B cell (primary cell): ENCODE measurements at regions of chr12 and their contacts with region 1.

Region 1: GRCh38 chr12:49358483-49359141 is 8.7 kb upstream of the SPATS2 start:
- DNase-seq: peak; percentile 83
- ATAC-seq: peak; percentile 91
- H3K4me3 ChIP-seq: no peak overlapping the region
- H3K4me3 Mint-ChIP-seq: no peak overlapping the region
- H3K27ac ChIP-seq: no peak overlapping the region
- H3K27ac Mint-ChIP-seq: no peak overlapping the region
- H3K4me1 ChIP-seq: peaks cover 3 to 5% of the 10 kb centered on the region in 2 donors
- H3K4me1 Mint-ChIP-seq: peaks cover 2% of the 10 kb centered on the region
- H3K27me3 ChIP-seq: peaks cover 0 to 13% (median 7%) of the 10 kb centered on the region in 4 experiments
- H3K27me3 Mint-ChIP-seq: peaks cover 32% of the 10 kb centered on the region
- CTCF ChIP-seq: peak; percentile 85

Region 2: DNA sequence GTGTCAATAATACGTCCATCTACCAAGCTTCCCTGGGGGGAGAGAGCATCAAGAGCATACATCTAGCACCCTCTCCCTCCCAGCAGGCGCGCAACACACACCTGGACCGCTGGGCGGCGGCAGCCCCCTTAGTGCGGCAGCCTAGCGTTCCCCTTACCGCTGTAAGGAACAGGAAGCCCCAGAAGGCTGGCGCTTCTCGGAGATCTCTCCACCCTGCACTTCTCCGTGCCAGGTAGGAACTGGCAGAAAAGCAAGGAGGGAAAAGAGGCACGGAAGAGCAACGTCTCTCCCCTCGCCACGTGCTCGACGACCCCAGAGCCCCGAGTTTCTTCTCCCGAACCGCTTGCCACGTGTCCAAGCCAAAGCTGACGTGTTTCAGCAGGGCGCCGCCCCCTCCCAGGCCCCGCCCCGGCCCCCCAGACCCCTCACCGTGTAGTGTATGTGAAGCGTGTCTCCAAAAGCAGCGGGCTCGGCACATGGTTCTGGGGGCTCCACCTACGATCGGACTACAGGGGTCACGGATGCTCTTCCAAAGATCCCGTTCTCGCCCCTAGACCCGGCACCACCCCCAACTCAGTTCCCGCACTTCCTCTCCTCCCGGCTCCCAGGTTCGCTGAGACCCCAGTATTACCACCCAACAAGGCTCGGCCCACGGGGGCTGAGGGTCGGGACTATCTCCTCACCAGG is 433.9 kb before region 1 on chr12:
- CTCF ChIA-PET with region 1: no interaction called
- POLR2A ChIA-PET with region 1: no interaction called
- intact Hi-C with region 1: no loop called
- DNase-seq: peak; percentile 88
- ATAC-seq: peak; percentile 82
- H3K4me3 ChIP-seq: peak overlapping the region; percentile 70 to 100 (median 84)
- H3K4me3 Mint-ChIP-seq: peak overlapping the region; percentile 98
- H3K27ac ChIP-seq: peak overlapping the region; percentile 88 to 94
- H3K27ac Mint-ChIP-seq: peak overlapping the region; percentile 95
- H3K4me1 ChIP-seq: peaks cover 10 to 12% of the 10 kb centered on the region in 2 donors
- H3K4me1 Mint-ChIP-seq: peaks cover 14% of the 10 kb centered on the region
- H3K27me3 ChIP-seq: no peaks in the 10 kb centered on the region
- H3K27me3 Mint-ChIP-seq: no peaks in the 10 kb centered on the region
- CTCF ChIP-seq: peak; percentile 86

Region 3: GRCh38 chr12:49322708-49323523 is 35.7 kb before region 1 on chr12 and contains the start of gene TROAP:
- CTCF ChIA-PET with region 1: interaction called, 13 read pairs
- POLR2A ChIA-PET with region 1: no interaction called
- intact Hi-C with region 1: no loop called
- DNase-seq: peak; percentile 98
- ATAC-seq: peak; percentile 99
- H3K4me3 ChIP-seq: peak within 1 kb of the TSS; percentile 66 to 85 (median 70)
- H3K4me3 Mint-ChIP-seq: peak within 1 kb of the TSS; percentile 99
- H3K27ac ChIP-seq: peak within 1 kb of the TSS; percentile 40 to 74
- H3K27ac Mint-ChIP-seq: peak within 1 kb of the TSS; percentile 85
- H3K4me1 ChIP-seq: peaks cover 12 to 18% of the 10 kb centered on the region in 2 donors
- H3K4me1 Mint-ChIP-seq: peaks cover 23% of the 10 kb centered on the region
- H3K27me3 ChIP-seq: no peaks in the 10 kb centered on the region
- H3K27me3 Mint-ChIP-seq: no peaks in the 10 kb centered on the region
- CTCF ChIP-seq: no peak
- total RNA-seq, gene TROAP: 1.0 and 1.7 TPM in 2 replicates

Region 4: GRCh38 chr12:49342066-49342913 is 16.3 kb before region 1 on chr12:
- CTCF ChIA-PET with region 1: interaction called, 77 read pairs
- POLR2A ChIA-PET with region 1: no interaction called
- intact Hi-C with region 1: loop called (anchors 1 kb)
- DNase-seq: peak; percentile 83
- ATAC-seq: peak; percentile 69
- H3K4me3 ChIP-seq: peak overlapping the region in 4 of 5 experiments; percentile 29 to 51 (median 44)
- H3K4me3 Mint-ChIP-seq: peak overlapping the region; percentile 86
- H3K27ac ChIP-seq: no peak overlapping the region
- H3K27ac Mint-ChIP-seq: no peak overlapping the region
- H3K4me1 ChIP-seq: peaks cover 60 to 65% of the 10 kb centered on the region in 2 donors
- H3K4me1 Mint-ChIP-seq: peaks cover 58% of the 10 kb centered on the region
- H3K27me3 ChIP-seq: peaks cover 0 to 89% (median 47%) of the 10 kb centered on the region in 4 experiments
- H3K27me3 Mint-ChIP-seq: peaks cover 53% of the 10 kb centered on the region
- CTCF ChIP-seq: peak; percentile 96

Region 5: DNA sequence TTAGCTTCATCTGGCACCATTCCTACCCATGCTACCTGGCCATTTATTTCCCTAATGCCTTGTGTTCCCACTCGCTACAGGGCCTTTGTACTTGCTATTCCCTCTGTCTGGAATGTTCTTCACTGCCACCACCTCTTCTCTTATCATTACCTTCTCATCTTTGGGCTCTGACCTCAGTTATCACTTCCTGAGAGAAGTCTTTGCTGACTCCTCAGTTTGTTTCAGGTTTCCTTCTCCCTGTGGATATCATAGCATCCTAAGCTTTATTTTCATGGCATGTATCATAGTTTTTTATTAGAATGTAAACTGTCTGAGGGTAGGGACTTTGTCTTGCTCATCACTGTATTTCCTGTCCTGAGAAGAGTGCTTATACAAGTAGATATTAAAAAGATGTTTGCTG is 38.4 kb after region 1 on chr12:
- CTCF ChIA-PET with region 1: interaction called, 17 read pairs
- POLR2A ChIA-PET with region 1: no interaction called
- intact Hi-C with region 1: loop called (anchors 5 kb)
- DNase-seq: no peak
- ATAC-seq: no peak
- H3K4me3 ChIP-seq: no peak overlapping the region
- H3K4me3 Mint-ChIP-seq: no peak overlapping the region
- H3K27ac ChIP-seq: no peak overlapping the region
- H3K27ac Mint-ChIP-seq: no peak overlapping the region
- H3K4me1 ChIP-seq: no peaks in the 10 kb centered on the region
- H3K4me1 Mint-ChIP-seq: no peaks in the 10 kb centered on the region
- H3K27me3 ChIP-seq: no peaks in the 10 kb centered on the region
- H3K27me3 Mint-ChIP-seq: no peaks in the 10 kb centered on the region
- CTCF ChIP-seq: no peak

Region 6: GRCh38 chr12:49489720-49490119 is 131.1 kb after region 1 on chr12:
- CTCF ChIA-PET with region 1: interaction called, 20 read pairs
- POLR2A ChIA-PET with region 1: no interaction called
- intact Hi-C with region 1: no loop called
- DNase-seq: no peak
- ATAC-seq: no peak
- H3K4me3 ChIP-seq: no peak overlapping the region
- H3K4me3 Mint-ChIP-seq: no peak overlapping the region
- H3K27ac ChIP-seq: no peak overlapping the region
- H3K27ac Mint-ChIP-seq: no peak overlapping the region
- H3K4me1 ChIP-seq: no peaks in the 10 kb centered on the region
- H3K4me1 Mint-ChIP-seq: no peaks in the 10 kb centered on the region
- H3K27me3 ChIP-seq: no peaks in the 10 kb centered on the region
- H3K27me3 Mint-ChIP-seq: no peaks in the 10 kb centered on the region
- CTCF ChIP-seq: no peak

Region 7: DNA sequence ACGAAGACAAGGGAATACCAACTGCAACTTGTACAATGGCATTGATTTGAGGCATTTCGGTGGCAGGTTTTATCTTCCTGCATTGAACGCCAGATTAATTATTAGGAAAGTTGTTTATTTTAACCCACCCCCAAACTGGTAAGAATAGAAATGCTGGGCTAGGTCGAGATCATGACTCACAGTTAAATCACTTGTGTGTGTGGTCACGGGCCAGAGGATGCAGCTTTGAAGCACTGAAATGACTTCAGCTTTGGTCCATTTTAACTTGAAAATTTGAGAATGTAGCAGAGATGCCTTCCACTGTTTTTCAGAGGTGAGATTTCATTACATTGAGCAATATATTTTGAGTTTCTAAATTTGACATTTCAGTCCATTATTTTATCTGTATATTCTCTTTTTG is 156.7 kb after region 1 on chr12:
- CTCF ChIA-PET with region 1: interaction called, 729 read pairs
- POLR2A ChIA-PET with region 1: interaction called, 6 read pairs
- intact Hi-C with region 1: loop called (anchors 1 kb)
- DNase-seq: no peak
- ATAC-seq: no peak
- H3K4me3 ChIP-seq: no peak overlapping the region
- H3K4me3 Mint-ChIP-seq: no peak overlapping the region
- H3K27ac ChIP-seq: no peak overlapping the region
- H3K27ac Mint-ChIP-seq: no peak overlapping the region
- H3K4me1 ChIP-seq: no peaks in the 10 kb centered on the region
- H3K4me1 Mint-ChIP-seq: no peaks in the 10 kb centered on the region
- H3K27me3 ChIP-seq: no peaks in the 10 kb centered on the region
- H3K27me3 Mint-ChIP-seq: no peaks in the 10 kb centered on the region
- CTCF ChIP-seq: no peak